ENCODE measurements at regions of chr1 and their contacts with region 1.

Region 1: GRCh38 chr1:93061895-93062792 is 16.9 kb upstream of the MTF2 start:
- DNase-seq: peak; percentile 43 to 57 (median 49)
- H3K4me3 ChIP-seq: no peak overlapping the region
- H3K4me3 Mint-ChIP-seq: no peak overlapping the region
- H3K27ac ChIP-seq: no peak overlapping the region
- H3K27ac Mint-ChIP-seq: no peak overlapping the region
- H3K4me1 ChIP-seq: no peaks in the 10 kb centered on the region
- H3K4me1 Mint-ChIP-seq: peaks cover 0 to 5% (median 4%) of the 10 kb centered on the region in 4 donors
- H3K27me3 ChIP-seq: no peaks in the 10 kb centered on the region
- H3K27me3 Mint-ChIP-seq: peaks cover 12 to 20% of the 10 kb centered on the region in 2 donors

Region 2: GRCh38 chr1:93021539-93022134 is 40.5 kb before region 1 on chr1:
- CTCF ChIA-PET with region 1: interaction called, 274 read pairs
- POLR2A ChIA-PET with region 1: interaction called, 7 read pairs
- intact Hi-C with region 1: loop called (anchors 1 kb)
- DNase-seq: peak in 4 of 5 donors; percentile 59 to 63 (median 60)
- H3K4me3 ChIP-seq: no peak overlapping the region
- H3K4me3 Mint-ChIP-seq: no peak overlapping the region
- H3K27ac ChIP-seq: no peak overlapping the region
- H3K27ac Mint-ChIP-seq: no peak overlapping the region
- H3K4me1 ChIP-seq: no peaks in the 10 kb centered on the region
- H3K4me1 Mint-ChIP-seq: peaks cover 0 to 3% (median 2%) of the 10 kb centered on the region in 4 donors
- H3K27me3 ChIP-seq: no peaks in the 10 kb centered on the region
- H3K27me3 Mint-ChIP-seq: peaks cover 3 to 9% of the 10 kb centered on the region in 2 donors

Region 3: DNA sequence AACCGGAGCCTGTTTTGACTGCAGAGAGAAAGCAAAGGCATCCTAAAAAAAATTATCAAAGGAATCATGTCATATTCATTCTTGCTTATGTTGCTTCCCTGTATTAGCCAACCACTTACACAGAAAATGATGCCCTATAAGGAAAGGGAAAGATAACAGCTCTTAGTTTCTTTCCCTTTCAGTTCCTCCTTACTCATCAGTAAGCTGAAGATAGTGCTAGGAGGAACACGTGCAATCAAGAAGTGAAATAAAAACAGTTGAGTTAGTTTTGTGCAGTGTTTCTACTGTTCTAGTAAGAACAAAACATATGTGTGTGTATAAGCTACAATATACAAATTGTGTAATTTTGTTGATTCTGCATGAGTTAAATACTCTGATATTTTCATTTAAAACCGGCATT is 28.4 kb before region 1 on chr1:
- CTCF ChIA-PET with region 1: interaction called, 32 read pairs
- POLR2A ChIA-PET with region 1: interaction called, 3 read pairs
- intact Hi-C with region 1: no loop called
- DNase-seq: no peak
- H3K4me3 ChIP-seq: no peak overlapping the region
- H3K4me3 Mint-ChIP-seq: no peak overlapping the region
- H3K27ac ChIP-seq: no peak overlapping the region
- H3K27ac Mint-ChIP-seq: no peak overlapping the region
- H3K4me1 ChIP-seq: peaks cover 17% of the 10 kb centered on the region
- H3K4me1 Mint-ChIP-seq: peaks cover 9 to 17% (median 11%) of the 10 kb centered on the region in 4 donors
- H3K27me3 ChIP-seq: no peaks in the 10 kb centered on the region
- H3K27me3 Mint-ChIP-seq: no peaks in the 10 kb centered on the region

Region 4: GRCh38 chr1:93051961-93052360 is 10.2 kb before region 1 on chr1:
- CTCF ChIA-PET with region 1: interaction called, 19 read pairs
- POLR2A ChIA-PET with region 1: no interaction called
- intact Hi-C with region 1: no loop called
- DNase-seq: no peak
- H3K4me3 ChIP-seq: no peak overlapping the region
- H3K4me3 Mint-ChIP-seq: no peak overlapping the region
- H3K27ac ChIP-seq: no peak overlapping the region
- H3K27ac Mint-ChIP-seq: no peak overlapping the region
- H3K4me1 ChIP-seq: no peaks in the 10 kb centered on the region
- H3K4me1 Mint-ChIP-seq: no peaks in the 10 kb centered on the region
- H3K27me3 ChIP-seq: no peaks in the 10 kb centered on the region
- H3K27me3 Mint-ChIP-seq: peaks cover 0 to 1% of the 10 kb centered on the region in 2 donors